ENCODE measurements at regions of chr5 and their contacts with region 1.

Region 1: DNA sequence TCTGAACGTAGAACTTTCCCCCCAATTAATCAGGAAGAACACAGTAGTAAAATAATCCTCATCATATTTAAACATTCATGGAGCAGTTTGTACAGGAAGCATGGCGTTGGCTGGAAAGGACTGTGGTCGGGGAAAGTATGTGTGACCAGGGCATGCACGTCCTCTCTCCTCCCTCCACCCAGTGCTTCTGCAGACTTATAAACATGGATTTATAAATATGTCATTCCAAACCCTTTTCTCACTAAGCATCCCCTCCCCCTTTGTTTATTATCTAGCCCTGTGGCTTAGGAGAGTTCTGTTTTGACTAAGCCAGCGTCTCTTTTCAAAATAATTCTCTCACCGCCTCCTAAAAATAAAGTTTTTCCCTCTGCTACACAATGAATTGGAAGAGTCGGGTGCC is 70.4 kb upstream of the DAP start:
- DNase-seq: peak; percentile 95
- H3K4me3 ChIP-seq: no peak overlapping the region
- H3K27me3 ChIP-seq: no peaks in the 10 kb centered on the region
- CTCF ChIP-seq: no peak

Region 2: GRCh38 chr5:10648806-10649665 is 182.4 kb before region 1 on chr5:
- CTCF ChIA-PET with region 1: no interaction called
- POLR2A ChIA-PET with region 1: interaction called, 10 read pairs
- DNase-seq: no peak
- H3K4me3 ChIP-seq: no peak overlapping the region
- H3K27me3 ChIP-seq: no peaks in the 10 kb centered on the region
- CTCF ChIP-seq: no peak

Region 3: DNA sequence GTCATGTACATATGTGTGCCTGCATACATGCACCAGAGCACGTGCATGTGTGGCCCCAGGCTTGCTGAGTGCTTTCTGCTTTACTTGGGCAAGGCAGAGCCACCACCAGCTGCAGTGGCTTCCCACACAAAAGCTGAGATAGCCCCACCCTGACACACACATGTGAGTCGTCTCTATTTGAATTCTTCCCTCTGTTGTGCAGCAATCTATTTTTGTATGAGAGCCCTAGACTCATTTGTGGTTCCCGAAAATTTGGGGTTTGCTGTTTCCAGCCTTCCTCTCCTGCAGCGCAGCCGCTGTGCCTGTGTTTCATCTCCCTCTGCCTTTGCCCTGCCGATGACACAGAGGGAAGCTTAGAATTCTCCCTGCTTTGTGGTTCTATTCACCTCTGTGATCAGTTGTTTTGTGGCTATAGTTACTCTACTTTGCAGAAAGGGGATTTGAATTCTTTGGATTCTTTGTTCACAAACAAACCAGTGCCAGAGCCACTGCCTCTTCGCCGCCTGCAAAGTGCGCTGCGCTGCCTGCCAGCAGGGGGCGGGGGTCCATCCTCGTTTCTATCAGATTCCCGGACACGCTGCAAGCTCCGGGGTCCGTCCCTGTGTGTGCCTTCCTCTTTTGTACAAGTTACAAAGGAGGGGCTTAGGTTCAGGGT is 25.4 kb after region 1 on chr5:
- CTCF ChIA-PET with region 1: interaction called, 29 read pairs
- POLR2A ChIA-PET with region 1: no interaction called
- DNase-seq: peak; percentile 44
- H3K4me3 ChIP-seq: no peak overlapping the region
- H3K27me3 ChIP-seq: no peaks in the 10 kb centered on the region
- CTCF ChIP-seq: peak; percentile 98

Region 4: DNA sequence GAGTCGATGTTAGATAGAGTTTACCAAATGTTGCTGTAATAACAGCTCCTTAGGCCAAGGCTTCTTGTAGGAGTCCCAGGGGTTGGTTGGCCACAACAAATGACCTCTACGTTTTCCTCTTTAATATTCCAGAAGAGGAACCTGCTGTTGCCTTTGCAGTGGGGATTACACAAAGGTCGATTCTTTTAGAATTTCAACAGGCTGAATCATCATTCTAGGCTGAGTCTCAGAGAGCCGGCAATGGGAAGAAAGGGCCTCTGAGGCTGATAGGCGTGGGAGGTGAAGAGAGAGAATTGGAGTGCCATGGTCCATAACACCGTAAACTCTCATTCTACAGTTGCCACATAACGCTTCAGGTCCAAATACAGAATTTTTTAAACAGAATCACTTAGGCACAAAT is 335.5 kb after region 1 on chr5:
- CTCF ChIA-PET with region 1: no interaction called
- POLR2A ChIA-PET with region 1: no interaction called
- DNase-seq: no peak
- H3K4me3 ChIP-seq: no peak overlapping the region
- H3K27me3 ChIP-seq: no peaks in the 10 kb centered on the region
- CTCF ChIP-seq: no peak

Measured in BJ (cell line).